Posterior cingulate gyrus (tissue), 11 donors: ENCODE measurements at regions of chr1 and their contacts with region 1.

Region 1: DNA sequence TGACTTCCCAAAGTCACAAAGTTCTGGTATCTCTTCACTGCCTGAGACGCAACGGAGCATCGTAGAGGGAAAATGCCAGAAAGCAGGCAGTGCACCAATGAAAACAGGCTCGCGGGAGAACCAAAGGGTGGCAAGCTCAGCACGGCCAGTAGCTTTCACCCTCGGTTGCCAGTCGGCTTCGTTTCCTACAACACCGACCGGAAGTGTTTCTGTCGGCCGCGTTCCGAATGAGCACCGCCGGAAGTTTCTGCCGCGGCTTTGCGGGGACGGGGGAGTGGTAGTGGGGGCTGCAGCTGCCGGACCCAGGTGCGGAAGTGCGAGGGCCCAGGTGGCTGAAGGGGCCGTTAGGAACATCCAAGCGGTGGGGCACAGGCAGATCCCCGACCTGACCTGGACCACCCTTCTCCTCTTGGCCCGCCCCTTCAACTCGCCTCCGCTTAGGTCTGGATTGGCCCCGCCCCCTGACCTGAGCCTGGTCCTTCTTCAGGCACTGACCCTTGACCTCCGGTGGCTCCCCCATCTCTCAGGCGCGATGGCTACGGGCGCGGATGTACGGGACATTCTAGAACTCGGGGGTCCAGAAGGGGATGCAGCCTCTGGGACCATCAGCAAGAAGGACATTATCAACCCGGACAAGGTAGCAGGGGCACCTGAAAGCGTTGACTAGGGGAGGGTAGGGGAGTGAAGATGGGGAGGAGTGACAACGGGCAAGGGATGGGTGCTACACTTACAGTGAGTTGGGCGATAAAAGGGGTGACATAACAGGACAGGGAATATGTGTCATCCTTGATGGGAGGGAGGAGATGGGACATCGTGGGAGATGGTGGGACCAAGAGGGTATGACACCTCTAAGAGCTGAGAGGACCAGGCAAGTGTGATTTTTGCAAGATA is at the start of gene DMAP1:
- DNase-seq: peak; percentile 86 to 98 (median 91)

Region 2: DNA sequence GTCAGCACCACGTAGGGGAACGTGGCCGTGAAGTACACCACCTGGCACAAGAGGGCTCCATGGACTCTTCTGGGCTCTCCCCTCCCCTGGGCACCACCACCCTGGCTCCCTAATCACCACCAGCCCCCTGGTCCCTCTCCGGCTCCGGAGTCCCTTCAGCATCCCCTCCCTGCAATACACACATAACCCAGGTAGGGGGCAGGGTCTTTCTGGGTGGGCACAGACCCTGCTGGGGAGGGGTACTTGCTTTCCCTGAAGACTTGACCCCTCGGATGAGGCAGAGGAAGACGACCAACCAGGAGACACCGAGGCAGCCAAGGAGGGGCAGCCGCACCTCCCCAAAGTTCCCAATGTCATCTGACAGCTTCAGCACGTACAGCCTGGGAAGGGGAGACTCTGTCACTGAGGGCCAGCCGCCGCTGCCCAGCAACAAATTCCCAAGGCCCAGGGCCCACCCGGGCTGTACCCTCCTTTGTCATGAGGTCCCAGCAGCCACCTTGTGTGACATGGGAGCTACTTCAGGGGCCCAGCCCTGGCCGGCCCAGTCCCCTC is 210.8 kb before region 1 on chr1:
- intact Hi-C with region 1: loop called (anchors 10 kb)
- DNase-seq: no peak

Region 3: DNA sequence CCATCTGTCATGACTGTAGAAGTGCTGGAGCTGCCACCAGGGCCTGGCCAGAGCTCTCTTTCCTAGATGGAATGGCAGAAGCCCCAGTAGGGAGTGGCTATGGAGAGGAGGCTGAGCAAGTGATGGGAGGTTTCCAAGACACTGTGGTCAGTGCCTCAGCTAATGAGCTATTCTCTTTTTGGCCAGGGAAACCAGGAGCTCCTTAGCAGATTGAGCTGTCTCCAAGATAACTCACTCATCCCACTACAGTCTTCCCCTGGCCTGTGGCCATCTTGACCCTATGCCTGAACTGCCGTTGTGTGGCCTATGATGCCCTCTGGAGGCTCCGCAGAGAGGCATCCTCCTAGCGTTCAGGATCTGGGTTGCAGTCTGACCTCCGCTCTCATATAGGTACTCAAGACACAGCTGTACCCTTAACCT is 81.1 kb after region 1 on chr1:
- intact Hi-C with region 1: loop called (anchors 2 kb)
- DNase-seq: peak in 6 of 10 donors; percentile 24 to 90 (median 42)

Region 4: DNA sequence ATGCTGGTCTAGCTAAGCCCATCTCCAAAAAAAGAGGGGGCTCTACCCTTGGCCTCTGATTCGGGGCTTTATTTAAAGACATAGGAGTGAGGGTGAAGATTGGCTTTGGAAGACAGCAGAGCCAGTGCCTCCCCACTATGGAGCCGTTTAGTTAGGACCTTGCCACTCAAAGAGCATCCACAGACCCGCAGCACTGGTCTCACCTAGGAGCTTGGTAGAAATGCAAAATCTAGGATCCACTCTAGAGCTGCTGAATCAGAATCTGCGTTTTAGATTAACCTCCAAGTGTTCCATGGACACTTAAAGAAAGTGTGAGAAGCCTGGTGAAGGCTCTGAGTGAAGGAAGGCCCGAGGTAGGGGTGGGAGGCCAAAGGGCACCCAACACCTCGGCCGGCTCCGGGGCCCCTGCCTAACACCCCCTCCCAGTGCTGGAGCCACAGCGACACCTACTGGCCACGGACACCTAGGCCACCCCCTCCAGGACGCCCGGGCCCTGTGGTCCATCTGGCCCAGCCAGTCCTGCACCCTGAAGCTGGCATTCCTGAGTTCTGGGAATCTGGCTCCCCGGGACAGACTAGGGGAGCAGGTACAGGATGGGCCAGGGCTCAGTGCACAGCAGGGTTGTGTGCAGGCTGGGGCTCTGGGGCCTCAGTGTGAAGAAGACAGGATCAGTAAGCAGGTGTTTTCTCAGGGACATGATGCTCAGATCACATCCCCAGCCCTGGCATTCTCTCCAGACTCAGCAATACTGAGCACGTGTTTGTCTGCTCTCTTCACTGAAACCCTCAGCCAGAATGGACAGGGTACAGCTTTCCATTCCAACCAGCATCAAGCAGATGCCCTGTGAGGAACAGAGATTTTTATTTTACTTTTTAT is 381.6 kb after region 1 on chr1:
- intact Hi-C with region 1: loop called (anchors 10 kb)
- DNase-seq: peak; percentile 63 to 97 (median 89)